ENCODE measurements at regions of chr15 and their contacts with region 1.

Region 1: GRCh38 chr15:91706322-91707032 is 147.0 kb upstream of the SLCO3A1 start:
- DNase-seq: peak; percentile 84
- ATAC-seq: peak; percentile 96
- H3K4me3 Mint-ChIP-seq: no peak overlapping the region
- H3K27ac Mint-ChIP-seq: no peak overlapping the region
- H3K4me1 Mint-ChIP-seq: peaks cover 19% of the 10 kb centered on the region
- H3K27me3 Mint-ChIP-seq: peaks cover 3% of the 10 kb centered on the region; the same call in 1 of the 2 replicates
- CTCF ChIP-seq: peak; percentile 86

Region 2: DNA sequence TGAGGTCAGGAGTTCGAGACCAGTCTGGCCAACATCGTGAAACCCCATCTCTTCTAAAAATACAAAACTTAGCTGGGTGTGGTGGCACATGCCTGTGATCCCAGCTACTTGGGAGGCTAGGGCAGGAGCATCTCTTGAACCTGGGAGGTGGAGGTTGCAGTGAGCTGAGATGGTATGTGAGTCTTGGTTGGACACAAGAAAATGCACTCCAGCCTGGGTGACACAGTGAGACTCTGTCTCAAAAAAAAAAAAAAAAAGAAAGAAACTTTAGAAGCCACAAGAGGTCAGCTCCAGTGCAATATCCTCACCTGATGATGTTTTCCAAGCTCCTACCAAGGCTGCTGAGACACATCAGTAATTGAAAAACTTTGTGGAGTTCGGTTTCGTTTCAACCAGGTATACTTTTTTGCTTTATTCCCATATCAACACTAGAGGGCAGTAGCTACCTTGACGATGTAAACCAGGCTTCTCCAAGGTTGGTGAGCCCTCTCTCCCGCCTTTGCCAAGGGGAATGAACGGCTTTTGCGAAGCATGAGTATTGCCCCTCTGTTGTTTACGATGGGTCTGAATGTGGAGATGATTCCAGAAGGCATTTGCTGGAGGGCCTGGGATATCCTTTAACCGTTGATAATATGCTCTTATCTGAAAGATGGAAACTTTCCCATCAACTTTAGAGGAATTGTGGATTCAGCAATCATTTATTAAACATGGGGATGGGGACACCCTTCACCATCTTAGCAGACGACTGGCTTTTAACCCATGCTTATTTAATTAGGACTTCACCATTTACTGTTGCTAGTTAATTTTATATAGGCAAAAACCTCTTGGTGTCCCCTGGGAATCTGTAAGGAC is 403.7 kb before region 1 on chr15:
- CTCF ChIA-PET with region 1: interaction called, 13 read pairs
- POLR2A ChIA-PET with region 1: no interaction called
- DNase-seq: peak; percentile 44
- ATAC-seq: peak; percentile 90
- H3K4me3 Mint-ChIP-seq: no peak overlapping the region
- H3K27ac Mint-ChIP-seq: no peak overlapping the region
- H3K4me1 Mint-ChIP-seq: peaks cover 14% of the 10 kb centered on the region
- H3K27me3 Mint-ChIP-seq: peaks cover 14% of the 10 kb centered on the region
- CTCF ChIP-seq: peak; percentile 59

Region 3: DNA sequence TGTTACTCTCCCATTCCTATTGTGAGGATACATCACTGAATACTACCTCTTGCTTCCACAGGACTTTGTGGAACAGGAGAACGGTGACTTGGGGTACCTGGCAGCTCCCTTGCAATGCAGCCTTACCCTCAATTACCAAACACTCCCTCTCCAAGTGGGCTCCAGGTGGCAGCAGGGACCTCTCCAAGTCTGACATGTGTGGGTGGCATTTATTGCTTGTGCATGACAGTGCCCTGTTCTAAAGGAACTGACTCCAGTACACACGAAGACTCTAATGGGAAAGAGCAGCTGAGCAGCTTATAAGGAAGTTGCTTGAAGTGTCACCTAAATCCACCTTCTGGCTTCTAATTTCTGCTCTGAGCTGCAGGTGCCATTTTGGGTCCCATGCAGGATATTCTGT is 27.0 kb before region 1 on chr15:
- CTCF ChIA-PET with region 1: interaction called, 13 read pairs
- POLR2A ChIA-PET with region 1: no interaction called
- DNase-seq: no peak
- ATAC-seq: no peak
- H3K4me3 Mint-ChIP-seq: no peak overlapping the region
- H3K27ac Mint-ChIP-seq: no peak overlapping the region
- H3K4me1 Mint-ChIP-seq: peaks cover 6% of the 10 kb centered on the region
- H3K27me3 Mint-ChIP-seq: no peaks in the 10 kb centered on the region; the same call in none of the 2 replicates
- CTCF ChIP-seq: no peak

Region 4: GRCh38 chr15:91694831-91695210 is 11.7 kb before region 1 on chr15:
- CTCF ChIA-PET with region 1: interaction called, 20 read pairs
- POLR2A ChIA-PET with region 1: no interaction called
- DNase-seq: no peak
- ATAC-seq: no peak
- H3K4me3 Mint-ChIP-seq: no peak overlapping the region
- H3K27ac Mint-ChIP-seq: no peak overlapping the region
- H3K4me1 Mint-ChIP-seq: no peaks in the 10 kb centered on the region
- H3K27me3 Mint-ChIP-seq: no peaks in the 10 kb centered on the region
- CTCF ChIP-seq: no peak

Region 5: GRCh38 chr15:91723959-91724358 is 17.5 kb after region 1 on chr15:
- CTCF ChIA-PET with region 1: interaction called, 22 read pairs
- POLR2A ChIA-PET with region 1: interaction called, 3 read pairs
- DNase-seq: no peak
- ATAC-seq: no peak
- H3K4me3 Mint-ChIP-seq: no peak overlapping the region
- H3K27ac Mint-ChIP-seq: no peak overlapping the region
- H3K4me1 Mint-ChIP-seq: no peaks in the 10 kb centered on the region
- H3K27me3 Mint-ChIP-seq: no peaks in the 10 kb centered on the region
- CTCF ChIP-seq: no peak

Region 6: DNA sequence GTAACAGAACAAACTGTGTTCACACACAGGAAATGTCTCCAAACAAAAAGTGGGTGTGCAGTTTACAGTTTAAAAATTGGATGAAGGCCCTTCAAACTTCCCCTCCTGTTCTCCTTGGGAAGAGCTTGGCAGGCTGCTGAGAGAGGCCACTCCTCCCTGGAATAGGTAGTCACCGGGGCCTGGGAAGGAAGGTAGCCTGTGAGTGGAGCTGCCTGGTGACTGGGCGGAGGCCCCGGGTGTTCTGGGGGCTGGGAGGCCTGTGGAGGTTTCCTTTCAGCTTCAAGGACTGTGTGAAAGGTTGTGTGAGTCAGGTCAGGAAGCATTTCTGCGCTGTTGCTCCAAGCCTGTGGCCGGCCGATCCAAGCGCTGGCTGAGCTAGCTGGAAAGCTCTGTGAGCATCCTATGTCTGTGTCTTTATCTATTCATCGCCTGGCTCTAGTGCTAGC is 161.1 kb after region 1 on chr15:
- CTCF ChIA-PET with region 1: interaction called, 12 read pairs
- POLR2A ChIA-PET with region 1: no interaction called
- DNase-seq: peak; percentile 28
- ATAC-seq: peak; percentile 81
- H3K4me3 Mint-ChIP-seq: no peak overlapping the region
- H3K27ac Mint-ChIP-seq: no peak overlapping the region
- H3K4me1 Mint-ChIP-seq: peaks cover 34% of the 10 kb centered on the region
- H3K27me3 Mint-ChIP-seq: no peaks in the 10 kb centered on the region
- CTCF ChIP-seq: no peak